ENCODE measurements at regions of chr2 and their contacts with region 1.

Region 1: DNA sequence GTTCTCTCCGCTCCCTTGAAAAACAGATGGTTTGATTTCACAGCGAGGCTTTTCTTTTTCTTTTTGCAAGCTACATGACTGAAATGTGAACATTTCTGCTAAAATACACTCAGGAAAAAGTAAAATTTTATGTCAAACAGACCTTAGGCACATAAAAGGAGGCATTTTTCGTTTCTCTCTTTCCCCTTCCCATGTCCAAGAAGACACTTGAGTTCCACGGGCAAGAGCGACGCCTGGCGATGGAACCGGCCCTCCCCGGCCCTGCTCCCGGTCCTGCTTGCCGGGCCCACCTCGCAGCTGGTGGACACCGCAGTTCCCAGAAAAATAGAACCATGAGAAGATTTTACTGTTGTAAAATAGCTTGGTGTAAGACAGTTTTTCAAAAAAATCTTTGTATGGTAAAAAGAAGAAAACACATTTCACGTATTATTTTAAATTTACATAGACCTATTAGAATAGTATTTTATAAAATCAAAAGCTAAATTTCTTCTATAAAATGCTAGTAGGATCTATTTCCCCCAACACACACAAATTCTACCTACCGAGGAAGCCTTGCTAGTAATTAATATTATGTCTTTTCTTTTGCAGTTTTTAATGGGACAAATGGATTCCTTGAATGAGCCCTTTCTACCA is 2.3 kb upstream of the ALKAL2 start:
- DNase-seq: peak in 1 of 2 experiments; percentile 81
- H3K4me3 ChIP-seq: peak overlapping the region; percentile 42 to 65 (median 54); a peak in 7 of 8 replicates
- H3K27ac ChIP-seq: no peak overlapping the region
- H3K4me1 ChIP-seq: peaks cover 1 to 11% (median 9%) of the 10 kb centered on the region in 4 experiments; a peak in 4 of 7 replicates
- H3K27me3 ChIP-seq: peaks cover 9 to 48% (median 33%) of the 10 kb centered on the region in 4 experiments
- CTCF ChIP-seq: peak; percentile 74 to 88 (median 79)
- EP300 ChIP-seq: no peak
- POLR2A ChIP-seq: no peak
- RAD21 ChIP-seq: peak; percentile 86 to 91

Region 2: DNA sequence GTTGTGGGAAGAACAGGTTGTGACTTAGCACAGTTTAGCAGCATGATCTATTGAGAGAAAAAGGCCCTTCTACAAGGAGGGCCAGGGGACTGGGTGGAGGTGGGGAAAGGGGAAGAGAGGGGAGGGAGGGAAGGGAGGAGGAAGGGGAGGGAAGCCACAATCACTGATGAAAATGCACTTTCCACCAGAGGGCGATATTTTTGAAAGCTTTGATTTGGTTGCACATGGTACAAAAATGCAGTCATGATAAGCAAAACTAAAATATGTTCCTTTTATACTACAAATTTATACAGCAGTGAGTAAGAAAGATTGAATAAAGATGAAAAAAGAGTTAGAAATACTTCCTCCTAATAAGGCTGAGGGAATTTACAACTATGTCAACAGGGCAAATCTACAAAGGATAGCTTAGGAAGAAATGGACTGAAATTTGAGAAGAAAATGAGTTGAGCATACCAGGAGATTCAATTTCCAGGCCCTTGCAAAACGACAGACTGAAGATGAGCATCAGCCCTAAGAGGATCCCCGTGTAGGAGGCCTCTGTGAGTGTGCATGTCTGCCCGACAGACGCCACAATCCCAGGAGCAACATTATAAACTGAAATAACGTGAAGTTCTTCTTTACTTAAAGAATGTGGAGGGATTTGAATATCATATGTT is 43.6 kb before region 1 on chr2:
- CTCF ChIA-PET with region 1: interaction called, 17 read pairs
- POLR2A ChIA-PET with region 1: no interaction called
- DNase-seq: no peak
- H3K4me3 ChIP-seq: no peak overlapping the region
- H3K27ac ChIP-seq: no peak overlapping the region
- H3K4me1 ChIP-seq: no peaks in the 10 kb centered on the region
- H3K27me3 ChIP-seq: no peaks in the 10 kb centered on the region
- CTCF ChIP-seq: peak; percentile 22 to 54 (median 37)
- EP300 ChIP-seq: no peak
- POLR2A ChIP-seq: no peak
- RAD21 ChIP-seq: peak; percentile 35 to 40; a peak in 3 of 4 replicates

Region 3: GRCh38 chr2:275466-275865 is 14.7 kb before region 1 on chr2:
- CTCF ChIA-PET with region 1: interaction called, 28 read pairs
- POLR2A ChIA-PET with region 1: interaction called, 6 read pairs
- DNase-seq: no peak
- H3K4me3 ChIP-seq: no peak overlapping the region
- H3K27ac ChIP-seq: no peak overlapping the region
- H3K4me1 ChIP-seq: no peaks in the 10 kb centered on the region
- H3K27me3 ChIP-seq: no peaks in the 10 kb centered on the region
- CTCF ChIP-seq: no peak
- EP300 ChIP-seq: no peak
- POLR2A ChIP-seq: no peak
- RAD21 ChIP-seq: no peak

Region 4: GRCh38 chr2:332597-332996 is 42.4 kb after region 1 on chr2:
- CTCF ChIA-PET with region 1: no interaction called
- POLR2A ChIA-PET with region 1: no interaction called
- DNase-seq: no peak
- H3K4me3 ChIP-seq: no peak overlapping the region
- H3K27ac ChIP-seq: no peak overlapping the region
- H3K4me1 ChIP-seq: no peaks in the 10 kb centered on the region
- H3K27me3 ChIP-seq: no peaks in the 10 kb centered on the region
- CTCF ChIP-seq: peak in 2 of 3 experiments; percentile 11 to 44; a peak in 2 of 4 replicates
- EP300 ChIP-seq: no peak
- POLR2A ChIP-seq: no peak
- RAD21 ChIP-seq: peak; percentile 6 to 23; a peak in 1 of 4 replicates

Region 5: DNA sequence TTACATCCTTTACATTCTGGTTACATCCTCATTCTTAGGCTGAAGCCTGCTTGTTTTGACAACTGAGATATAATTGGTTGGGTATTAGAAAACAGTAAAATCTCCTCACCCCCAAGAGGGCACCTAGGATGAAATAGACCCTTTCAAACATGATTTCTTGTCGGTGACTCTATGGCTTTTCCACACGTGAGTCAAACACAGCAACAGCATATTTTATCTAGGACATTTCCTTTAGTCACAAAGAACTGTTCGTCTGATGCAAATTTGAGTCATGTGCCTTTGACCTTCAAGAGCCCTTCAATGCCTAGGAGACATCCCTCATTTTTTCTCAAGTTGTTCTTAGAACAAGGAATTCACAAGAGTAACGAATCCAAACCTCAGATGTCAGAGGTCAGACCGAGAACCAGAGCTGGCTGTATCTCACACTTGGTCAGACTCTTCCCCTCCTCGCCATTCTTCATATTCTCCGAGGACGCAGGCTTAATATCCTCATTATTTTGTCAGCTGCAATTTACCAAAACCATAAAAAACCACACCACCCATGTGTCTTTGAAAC is 58.2 kb after region 1 on chr2:
- CTCF ChIA-PET with region 1: no interaction called
- POLR2A ChIA-PET with region 1: no interaction called
- DNase-seq: no peak
- H3K4me3 ChIP-seq: no peak overlapping the region
- H3K27ac ChIP-seq: no peak overlapping the region
- H3K4me1 ChIP-seq: no peaks in the 10 kb centered on the region
- H3K27me3 ChIP-seq: no peaks in the 10 kb centered on the region
- CTCF ChIP-seq: no peak
- EP300 ChIP-seq: no peak
- POLR2A ChIP-seq: no peak
- RAD21 ChIP-seq: no peak

Measured in H1 (cell line).